Aorta (tissue), 5 donors: ENCODE measurements at regions of chr3 and their contacts with region 1.

Region 1: DNA sequence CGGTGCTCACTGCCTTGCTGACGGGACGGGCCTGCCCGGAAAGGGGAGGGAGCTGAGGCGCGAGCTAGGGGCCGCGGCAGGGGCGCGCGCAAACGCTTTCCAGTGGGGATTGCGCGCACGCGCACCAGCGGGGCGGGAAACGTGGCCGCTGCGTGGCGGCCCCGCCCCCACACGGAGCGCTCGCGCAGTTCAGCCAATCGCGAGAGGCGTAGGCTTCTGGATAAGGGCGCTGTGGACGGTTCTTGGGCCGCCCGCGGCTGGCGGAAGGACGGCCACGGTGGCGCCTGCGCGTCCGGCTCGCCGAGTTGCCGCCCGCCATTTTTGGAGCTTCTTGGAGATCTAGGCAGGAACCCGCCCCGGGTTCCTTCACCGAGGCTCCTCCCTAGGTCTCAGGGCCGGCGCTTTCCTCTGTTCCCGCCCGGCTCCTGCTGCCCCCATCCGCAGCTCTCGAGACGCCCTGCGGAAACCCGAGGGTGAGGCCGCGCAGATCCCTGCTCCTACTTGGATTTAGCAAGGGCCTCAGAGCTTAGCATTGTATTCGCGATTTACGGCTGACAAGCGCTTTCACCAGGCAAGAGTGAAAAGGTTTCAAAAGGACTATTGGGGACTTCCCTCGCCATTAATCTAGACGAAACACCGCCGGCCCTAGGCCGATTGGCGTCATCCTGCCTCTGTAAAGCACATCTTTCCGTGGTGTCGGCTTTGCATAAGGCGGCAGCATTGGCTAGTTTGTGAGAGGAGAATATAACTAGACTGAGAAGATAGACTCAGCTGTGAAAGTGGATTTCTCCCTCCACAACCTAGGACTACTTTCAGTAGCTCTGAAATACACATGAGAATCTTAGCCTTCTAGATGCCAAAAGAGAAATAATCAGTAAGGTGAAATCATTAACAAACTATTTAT is 496 bp upstream of the STAG1 start:
- DNase-seq: peak; percentile 99 to 100
- ATAC-seq: peak; percentile 98
- H3K4me3 ChIP-seq: peak overlapping the region; percentile 35 to 71
- H3K27ac ChIP-seq: peak overlapping the region; percentile 96 to 99
- H3K4me1 ChIP-seq: peaks cover 0 to 5% of the 10 kb centered on the region in 2 donors
- H3K27me3 ChIP-seq: no peaks in the 10 kb centered on the region

Region 2: GRCh38 chr3:136075218-136075808 is 677.4 kb before region 1 on chr3:
- intact Hi-C with region 1: loop called (anchors 5 kb)
- DNase-seq: peak; percentile 71 to 79
- ATAC-seq: peak; percentile 87
- H3K4me3 ChIP-seq: no peak overlapping the region
- H3K27ac ChIP-seq: no peak overlapping the region
- H3K4me1 ChIP-seq: peaks cover 0 to 3% of the 10 kb centered on the region in 2 donors
- H3K27me3 ChIP-seq: no peaks in the 10 kb centered on the region

Region 3: GRCh38 chr3:136250226-136250902 is 502.3 kb before region 1 on chr3 and contains the start of gene PCCB:
- intact Hi-C with region 1: loop called in 1 of 2 experiments (anchors 2 kb)
- DNase-seq: peak; percentile 97 to 98
- ATAC-seq: peak; percentile 98
- H3K4me3 ChIP-seq: peak within 1 kb of the TSS; percentile 19 to 79
- H3K27ac ChIP-seq: peak within 1 kb of the TSS in 1 of 2 donors; percentile 49
- H3K4me1 ChIP-seq: no peaks in the 10 kb centered on the region
- H3K27me3 ChIP-seq: no peaks in the 10 kb centered on the region
- total RNA-seq, gene PCCB: 16.4 to 18.7 TPM

Region 4: DNA sequence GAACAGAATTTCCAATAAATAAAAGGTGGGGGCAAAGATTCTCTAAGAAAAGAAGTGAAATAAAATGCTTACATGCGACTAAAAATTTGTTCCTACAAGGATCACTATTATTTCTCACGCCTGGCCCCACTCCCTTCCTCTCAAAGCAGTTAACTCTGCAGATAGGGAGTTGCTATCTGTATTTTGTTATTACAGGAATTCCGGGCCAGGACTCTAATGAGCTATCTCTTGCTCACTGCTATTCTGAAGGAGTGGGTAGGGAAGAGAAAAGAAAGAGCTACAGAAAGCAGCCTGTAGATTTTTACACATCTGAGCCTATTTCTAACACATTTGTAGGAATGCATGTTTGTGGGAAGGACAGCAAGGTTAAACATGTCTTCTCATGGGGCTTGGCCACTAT is 362.1 kb before region 1 on chr3:
- intact Hi-C with region 1: loop called in 1 of 2 experiments (anchors 5 kb)
- DNase-seq: no peak
- ATAC-seq: no peak
- H3K4me3 ChIP-seq: no peak overlapping the region
- H3K27ac ChIP-seq: no peak overlapping the region
- H3K4me1 ChIP-seq: peaks cover 0 to 2% of the 10 kb centered on the region in 2 donors
- H3K27me3 ChIP-seq: no peaks in the 10 kb centered on the region

Region 5: GRCh38 chr3:136818769-136819391 is 66.2 kb after region 1 on chr3 and contains the start of gene SLC35G2:
- intact Hi-C with region 1: loop called in 1 of 2 experiments (anchors 1 kb)
- DNase-seq: peak; percentile 61 to 84
- ATAC-seq: peak; percentile 90
- H3K4me3 ChIP-seq: peak within 1 kb of the TSS; percentile 38 to 58
- H3K27ac ChIP-seq: no peak within 1 kb of the TSS
- H3K4me1 ChIP-seq: no peaks in the 10 kb centered on the region
- H3K27me3 ChIP-seq: no peaks in the 10 kb centered on the region
- total RNA-seq, gene SLC35G2: 7.5 to 13.1 TPM

Region 6: GRCh38 chr3:136899622-136900158 is 147.0 kb after region 1 on chr3:
- intact Hi-C with region 1: no loop called
- DNase-seq: no peak
- ATAC-seq: no peak
- H3K4me3 ChIP-seq: no peak overlapping the region
- H3K27ac ChIP-seq: no peak overlapping the region
- H3K4me1 ChIP-seq: no peaks in the 10 kb centered on the region
- H3K27me3 ChIP-seq: no peaks in the 10 kb centered on the region

Region 7: GRCh38 chr3:136994772-136995516 is 242.3 kb after region 1 on chr3:
- intact Hi-C with region 1: loop called in 1 of 2 experiments (anchors 5 kb)
- DNase-seq: peak; percentile 92 to 93
- ATAC-seq: peak; percentile 93
- H3K4me3 ChIP-seq: no peak overlapping the region
- H3K27ac ChIP-seq: peak overlapping the region; percentile 90 to 95
- H3K4me1 ChIP-seq: peaks cover 0 to 3% of the 10 kb centered on the region in 2 donors
- H3K27me3 ChIP-seq: no peaks in the 10 kb centered on the region